Activated CD4-positive, alpha-beta T cell treated with anti-CD3 and anti-CD28 coated beads for 36 hours (primary cell): ENCODE measurements at regions of chr18 and their contacts with region 1.

Region 1: GRCh38 chr18:46013484-46014189 is 46.5 kb upstream of the EPG5 start:
- DNase-seq: peak; percentile 16
- ATAC-seq: peak; percentile 91
- H3K4me3 Mint-ChIP-seq: peak overlapping the region; percentile 20
- H3K27ac Mint-ChIP-seq: no peak overlapping the region
- H3K4me1 Mint-ChIP-seq: peaks cover 18% of the 10 kb centered on the region
- H3K27me3 Mint-ChIP-seq: no peaks in the 10 kb centered on the region

Region 2: GRCh38 chr18:45670281-45670962 is 343.2 kb before region 1 on chr18:
- CTCF ChIA-PET with region 1: interaction called, 3 read pairs
- POLR2A ChIA-PET with region 1: no interaction called
- intact Hi-C with region 1: loop called in 1 of 2 experiments (anchors 1 kb)
- DNase-seq: peak; percentile 79
- ATAC-seq: peak; percentile 73
- H3K4me3 Mint-ChIP-seq: peak overlapping the region; percentile 56
- H3K27ac Mint-ChIP-seq: peak overlapping the region; percentile 85
- H3K4me1 Mint-ChIP-seq: peaks cover 63% of the 10 kb centered on the region
- H3K27me3 Mint-ChIP-seq: no peaks in the 10 kb centered on the region

Region 3: DNA sequence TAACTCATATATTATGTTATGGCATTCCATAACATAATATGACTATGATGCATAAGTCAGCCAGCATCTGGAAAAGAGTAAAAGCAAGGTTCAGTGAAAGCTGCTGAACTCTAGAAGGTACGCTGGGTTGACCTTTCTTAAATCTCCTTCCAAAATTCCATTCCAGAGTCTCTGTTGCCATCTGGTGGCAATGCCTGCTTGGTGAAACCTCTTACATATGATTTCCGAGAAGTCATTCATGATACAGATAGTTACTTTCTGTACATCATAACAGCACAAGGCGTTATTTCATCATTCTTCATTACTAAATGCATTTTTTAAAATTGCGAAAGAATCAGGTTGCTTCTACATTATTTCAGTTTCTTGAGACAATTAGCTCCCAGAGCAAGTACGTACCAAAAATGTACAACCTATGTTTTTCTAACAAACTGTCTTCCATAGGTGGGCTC is 39.5 kb before region 1 on chr18:
- CTCF ChIA-PET with region 1: interaction called, 3 read pairs
- POLR2A ChIA-PET with region 1: no interaction called
- intact Hi-C with region 1: loop called in 1 of 2 experiments (anchors 1 kb)
- DNase-seq: peak; percentile 83
- ATAC-seq: peak; percentile 90
- H3K4me3 Mint-ChIP-seq: no peak overlapping the region
- H3K27ac Mint-ChIP-seq: peak overlapping the region; percentile 89
- H3K4me1 Mint-ChIP-seq: peaks cover 11% of the 10 kb centered on the region
- H3K27me3 Mint-ChIP-seq: no peaks in the 10 kb centered on the region

Region 4: GRCh38 chr18:46028536-46028891 is 14.9 kb after region 1 on chr18:
- CTCF ChIA-PET with region 1: interaction called, 3 read pairs
- POLR2A ChIA-PET with region 1: no interaction called
- intact Hi-C with region 1: loop called in 1 of 2 experiments (anchors 1 kb)
- DNase-seq: no peak
- ATAC-seq: no peak
- H3K4me3 Mint-ChIP-seq: peak overlapping the region; percentile 71
- H3K27ac Mint-ChIP-seq: peak overlapping the region; percentile 89
- H3K4me1 Mint-ChIP-seq: peaks cover 12% of the 10 kb centered on the region
- H3K27me3 Mint-ChIP-seq: peaks cover 9% of the 10 kb centered on the region

Region 5: GRCh38 chr18:46213295-46213694 is 199.7 kb after region 1 on chr18:
- CTCF ChIA-PET with region 1: no interaction called
- POLR2A ChIA-PET with region 1: no interaction called
- intact Hi-C with region 1: loop called in 1 of 2 experiments (anchors 5 kb)
- DNase-seq: no peak
- ATAC-seq: no peak
- H3K4me3 Mint-ChIP-seq: no peak overlapping the region
- H3K27ac Mint-ChIP-seq: no peak overlapping the region
- H3K4me1 Mint-ChIP-seq: peaks cover 87% of the 10 kb centered on the region
- H3K27me3 Mint-ChIP-seq: no peaks in the 10 kb centered on the region

Region 6: DNA sequence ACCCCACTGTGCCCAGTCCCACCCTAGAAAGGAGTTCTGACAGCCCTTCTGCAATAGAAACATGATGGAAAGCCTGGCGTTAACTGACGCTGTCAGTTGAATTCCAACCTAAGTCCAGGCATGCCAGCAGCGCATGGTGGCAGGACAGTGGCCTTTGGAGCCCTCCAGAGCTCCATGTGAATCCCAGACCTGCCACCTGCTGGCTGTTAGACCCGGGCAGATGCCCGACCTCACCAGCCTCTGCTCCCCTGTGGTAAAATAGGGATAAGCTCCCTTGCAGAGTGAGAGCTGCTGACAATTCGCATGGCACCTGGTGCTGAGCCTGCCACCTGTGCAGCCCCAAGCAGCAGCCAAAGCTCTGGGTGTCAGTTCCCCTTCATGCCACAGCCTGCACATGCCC is 504.8 kb after region 1 on chr18:
- CTCF ChIA-PET with region 1: no interaction called
- POLR2A ChIA-PET with region 1: no interaction called
- intact Hi-C with region 1: no loop called
- DNase-seq: no peak
- ATAC-seq: no peak
- H3K4me3 Mint-ChIP-seq: no peak overlapping the region
- H3K27ac Mint-ChIP-seq: no peak overlapping the region
- H3K4me1 Mint-ChIP-seq: no peaks in the 10 kb centered on the region
- H3K27me3 Mint-ChIP-seq: peaks cover 3% of the 10 kb centered on the region